B cell (primary cell): ENCODE measurements at regions of chr1 and their contacts with region 1.

Region 1: DNA sequence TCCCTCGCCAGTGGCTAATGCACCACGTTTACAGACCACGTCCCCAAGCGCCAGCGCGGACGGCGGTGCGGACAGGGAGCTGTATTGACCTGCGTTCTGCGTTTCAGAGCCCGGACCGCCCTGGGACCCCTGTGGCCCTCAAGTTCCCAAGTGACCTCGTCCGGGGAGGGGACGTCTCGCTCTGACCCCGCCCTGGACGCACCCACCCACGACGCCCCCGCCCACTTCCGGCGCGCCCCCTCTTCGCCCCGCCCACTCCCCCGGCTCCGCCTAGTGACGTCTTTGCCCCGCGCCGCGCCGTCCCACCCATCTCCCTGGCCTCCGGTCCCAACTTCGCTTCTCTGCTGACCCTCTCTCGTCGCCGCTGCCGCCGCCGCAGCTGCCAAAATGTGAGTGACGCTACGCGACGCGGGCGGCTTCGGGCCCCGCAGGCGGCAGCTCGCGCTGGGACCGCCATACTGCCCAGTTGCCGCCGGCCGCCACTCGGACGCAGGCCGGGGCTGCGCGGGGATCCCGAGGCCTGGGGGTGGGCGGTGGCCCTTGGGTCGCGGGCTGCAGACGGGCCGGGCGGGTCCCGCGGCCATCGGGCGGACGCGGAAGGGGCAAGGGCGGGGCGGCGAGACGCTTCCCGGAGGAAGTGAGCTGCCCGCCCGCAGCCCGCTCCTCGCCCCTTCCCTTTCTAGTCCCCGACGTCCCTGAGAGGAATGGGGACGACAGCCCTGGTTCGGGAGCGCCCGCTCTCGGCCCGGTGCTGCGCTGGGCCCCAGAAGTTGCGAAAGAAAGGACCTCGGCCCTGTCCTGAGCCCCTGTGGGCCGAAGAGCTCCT is at the start of gene VAMP3:
- DNase-seq: peak; percentile 86
- ATAC-seq: peak; percentile 96
- H3K4me3 ChIP-seq: peak within 1 kb of the TSS; percentile 70 to 86 (median 77)
- H3K4me3 Mint-ChIP-seq: peak within 1 kb of the TSS; percentile 89
- H3K27ac ChIP-seq: peak within 1 kb of the TSS; percentile 59 to 86
- H3K27ac Mint-ChIP-seq: peak within 1 kb of the TSS; percentile 88
- H3K4me1 ChIP-seq: peaks cover 12 to 15% of the 10 kb centered on the region in 2 donors
- H3K4me1 Mint-ChIP-seq: peaks cover 28% of the 10 kb centered on the region
- H3K27me3 ChIP-seq: no peaks in the 10 kb centered on the region
- H3K27me3 Mint-ChIP-seq: no peaks in the 10 kb centered on the region
- CTCF ChIP-seq: no peak
- total RNA-seq, gene VAMP3: 48.6 and 49.6 TPM in 2 replicates

Region 2: GRCh38 chr1:7704214-7705047 is 66.8 kb before region 1 on chr1:
- CTCF ChIA-PET with region 1: no interaction called
- POLR2A ChIA-PET with region 1: no interaction called
- intact Hi-C with region 1: loop called (anchors 2 kb)
- DNase-seq: peak; percentile 95
- ATAC-seq: peak; percentile 98
- H3K4me3 ChIP-seq: peak overlapping the region in 4 of 5 experiments; percentile 49 to 67 (median 62)
- H3K4me3 Mint-ChIP-seq: peak overlapping the region; percentile 88
- H3K27ac ChIP-seq: no peak overlapping the region
- H3K27ac Mint-ChIP-seq: peak overlapping the region; percentile 88
- H3K4me1 ChIP-seq: peaks cover 6 to 15% of the 10 kb centered on the region in 2 donors
- H3K4me1 Mint-ChIP-seq: peaks cover 14% of the 10 kb centered on the region
- H3K27me3 ChIP-seq: peaks cover 0 to 15% (median 7%) of the 10 kb centered on the region in 4 experiments
- H3K27me3 Mint-ChIP-seq: peaks cover 7% of the 10 kb centered on the region
- CTCF ChIP-seq: no peak

Region 3: DNA sequence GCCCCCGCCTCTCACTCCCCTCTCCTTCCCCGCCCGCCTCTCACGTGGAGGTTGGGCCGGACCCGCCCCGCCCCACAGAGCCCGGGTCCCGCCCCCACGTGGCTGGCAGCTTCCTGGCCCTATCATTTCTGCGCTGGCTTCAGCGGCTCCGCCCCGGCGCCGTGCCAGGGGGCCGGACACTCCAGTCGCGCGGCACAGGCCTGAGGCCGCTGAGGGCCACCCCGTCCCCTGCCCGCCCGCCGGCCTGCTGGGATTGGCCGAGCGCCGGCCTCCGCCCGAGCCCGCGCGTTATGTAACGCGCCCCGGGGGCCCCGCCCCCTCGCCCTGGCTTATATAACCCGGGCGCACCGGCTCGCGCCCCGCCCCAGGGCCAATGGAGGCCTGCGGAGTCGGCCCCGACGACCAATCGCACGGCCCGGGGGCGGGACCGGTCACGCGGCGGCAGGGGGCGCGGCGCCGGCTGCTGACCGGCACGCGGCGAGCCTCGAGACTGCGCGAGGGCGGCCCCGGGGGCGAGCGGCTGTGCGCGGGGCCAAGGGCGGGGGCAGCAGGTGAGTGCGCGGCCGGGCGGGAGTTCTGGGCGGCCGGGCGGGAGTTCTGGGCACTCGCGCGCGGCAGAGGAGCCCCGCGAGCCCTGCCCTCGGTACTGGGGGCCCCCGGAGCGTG is 12.7 kb after region 1 on chr1 and contains the start of gene PER3:
- CTCF ChIA-PET with region 1: no interaction called
- POLR2A ChIA-PET with region 1: interaction called, 5 read pairs
- intact Hi-C with region 1: loop called (anchors 1 kb)
- DNase-seq: peak; percentile 96
- ATAC-seq: peak; percentile 85
- H3K4me3 ChIP-seq: peak within 1 kb of the TSS in 4 of 5 experiments; percentile 26 to 69 (median 62)
- H3K4me3 Mint-ChIP-seq: peak within 1 kb of the TSS; percentile 80
- H3K27ac ChIP-seq: peak within 1 kb of the TSS; percentile 39 to 87
- H3K27ac Mint-ChIP-seq: peak within 1 kb of the TSS; percentile 68
- H3K4me1 ChIP-seq: peaks cover 8 to 22% of the 10 kb centered on the region in 2 donors
- H3K4me1 Mint-ChIP-seq: peaks cover 21% of the 10 kb centered on the region
- H3K27me3 ChIP-seq: no peaks in the 10 kb centered on the region
- H3K27me3 Mint-ChIP-seq: no peaks in the 10 kb centered on the region
- CTCF ChIP-seq: no peak
- total RNA-seq, gene PER3: 5.8 and 8.5 TPM in 2 replicates

Region 4: DNA sequence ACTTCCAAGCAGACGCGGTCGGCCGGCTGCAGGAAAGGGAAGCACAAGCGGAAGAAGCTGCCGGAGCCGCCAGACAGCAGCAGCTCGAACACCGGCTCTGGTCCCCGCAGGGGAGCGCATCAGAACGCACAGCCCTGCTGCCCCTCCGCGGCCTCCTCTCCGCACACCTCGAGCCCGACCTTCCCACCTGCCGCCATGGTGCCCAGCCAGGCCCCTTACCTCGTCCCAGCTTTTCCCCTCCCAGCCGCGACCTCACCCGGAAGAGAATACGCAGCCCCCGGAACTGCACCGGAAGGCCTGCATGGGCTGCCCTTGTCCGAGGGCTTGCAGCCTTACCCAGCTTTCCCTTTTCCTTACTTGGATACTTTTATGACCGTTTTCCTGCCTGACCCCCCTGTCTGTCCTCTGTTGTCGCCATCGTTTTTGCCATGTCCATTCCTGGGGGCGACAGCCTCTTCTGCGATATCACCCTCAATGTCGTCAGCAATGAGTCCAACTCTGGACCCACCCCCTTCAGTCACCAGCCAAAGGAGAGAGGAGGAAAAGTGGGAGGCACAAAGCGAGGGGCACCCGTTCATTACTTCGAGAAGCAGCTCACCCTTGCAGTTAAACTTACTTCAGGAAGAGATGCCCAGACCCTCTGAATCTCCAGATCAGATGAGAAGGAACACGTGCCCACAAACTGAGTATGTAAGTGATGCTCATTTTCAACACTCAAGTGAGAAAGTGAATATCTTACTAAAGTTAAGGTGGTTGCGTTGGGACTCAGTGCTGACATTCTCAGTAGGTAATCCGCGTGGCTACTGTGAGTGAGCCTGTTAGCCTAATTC is 56.1 kb after region 1 on chr1:
- CTCF ChIA-PET with region 1: no interaction called
- POLR2A ChIA-PET with region 1: no interaction called
- intact Hi-C with region 1: no loop called
- DNase-seq: peak; percentile 68
- ATAC-seq: no peak
- H3K4me3 ChIP-seq: peak overlapping the region; percentile 20 to 53 (median 36)
- H3K4me3 Mint-ChIP-seq: peak overlapping the region; percentile 85
- H3K27ac ChIP-seq: peak overlapping the region in 1 of 2 donors; percentile 25
- H3K27ac Mint-ChIP-seq: peak overlapping the region; percentile 89
- H3K4me1 ChIP-seq: peaks cover 7 to 17% of the 10 kb centered on the region in 2 donors
- H3K4me1 Mint-ChIP-seq: peaks cover 17% of the 10 kb centered on the region
- H3K27me3 ChIP-seq: no peaks in the 10 kb centered on the region
- H3K27me3 Mint-ChIP-seq: no peaks in the 10 kb centered on the region
- CTCF ChIP-seq: no peak